Endothelial cell of umbilical vein (primary cell): ENCODE measurements at regions of chr4 and their contacts with region 1.

Region 1: GRCh38 chr4:6250235-6250983 is 19.2 kb upstream of the WFS1 start:
- DNase-seq: peak; percentile 74
- H3K4me3 ChIP-seq: no peak overlapping the region
- H3K27ac ChIP-seq: no peak overlapping the region
- H3K4me1 ChIP-seq: no peaks in the 10 kb centered on the region
- H3K27me3 ChIP-seq: peaks cover 6 to 8% of the 10 kb centered on the region in 2 experiments
- CTCF ChIP-seq: peak; percentile 61 to 62
- POLR2A ChIP-seq: no peak

Region 2: DNA sequence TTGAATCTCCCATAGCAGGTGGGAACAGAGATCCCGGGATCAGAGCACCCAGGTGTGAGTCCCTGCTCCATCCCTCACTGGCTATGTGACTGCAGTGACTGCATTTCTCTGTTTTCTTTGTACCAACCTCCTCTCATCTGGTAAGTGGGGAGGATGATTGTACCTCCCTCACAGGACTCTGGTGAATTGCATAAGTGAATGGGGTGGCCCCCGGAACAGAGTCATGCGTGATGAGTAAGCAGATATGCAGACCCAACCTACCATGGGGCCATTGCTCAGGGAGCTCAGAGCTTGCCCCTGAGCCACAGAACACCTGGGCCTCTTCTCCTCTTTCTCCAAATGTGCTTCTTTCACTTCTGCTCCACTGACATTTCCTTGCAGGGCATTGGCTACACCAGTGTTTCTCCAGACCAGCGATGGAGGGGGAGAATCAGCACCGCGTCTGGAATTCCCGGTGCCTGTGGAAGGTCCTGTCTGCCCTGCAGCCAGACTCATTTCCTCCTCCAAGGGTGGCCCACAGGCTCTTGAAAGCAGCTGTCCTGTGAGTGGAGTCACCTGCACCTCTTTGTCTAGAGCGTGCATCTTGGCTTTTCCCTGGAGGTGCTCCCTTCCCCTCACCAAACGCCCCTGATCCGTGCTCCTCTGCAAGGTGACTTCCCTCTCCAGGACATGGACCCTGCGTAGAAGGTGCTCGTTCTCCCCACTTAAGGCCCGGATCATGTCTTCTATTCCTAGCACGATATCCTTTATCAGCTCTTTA is 262.1 kb before region 1 on chr4:
- CTCF ChIA-PET with region 1: no interaction called
- POLR2A ChIA-PET with region 1: no interaction called
- dilution Hi-C with region 1: no loop called
- intact Hi-C with region 1: no loop called
- DNase-seq: no peak
- H3K4me3 ChIP-seq: no peak overlapping the region
- H3K27ac ChIP-seq: no peak overlapping the region
- H3K4me1 ChIP-seq: no peaks in the 10 kb centered on the region
- H3K27me3 ChIP-seq: no peaks in the 10 kb centered on the region
- CTCF ChIP-seq: no peak
- POLR2A ChIP-seq: no peak

Region 3: DNA sequence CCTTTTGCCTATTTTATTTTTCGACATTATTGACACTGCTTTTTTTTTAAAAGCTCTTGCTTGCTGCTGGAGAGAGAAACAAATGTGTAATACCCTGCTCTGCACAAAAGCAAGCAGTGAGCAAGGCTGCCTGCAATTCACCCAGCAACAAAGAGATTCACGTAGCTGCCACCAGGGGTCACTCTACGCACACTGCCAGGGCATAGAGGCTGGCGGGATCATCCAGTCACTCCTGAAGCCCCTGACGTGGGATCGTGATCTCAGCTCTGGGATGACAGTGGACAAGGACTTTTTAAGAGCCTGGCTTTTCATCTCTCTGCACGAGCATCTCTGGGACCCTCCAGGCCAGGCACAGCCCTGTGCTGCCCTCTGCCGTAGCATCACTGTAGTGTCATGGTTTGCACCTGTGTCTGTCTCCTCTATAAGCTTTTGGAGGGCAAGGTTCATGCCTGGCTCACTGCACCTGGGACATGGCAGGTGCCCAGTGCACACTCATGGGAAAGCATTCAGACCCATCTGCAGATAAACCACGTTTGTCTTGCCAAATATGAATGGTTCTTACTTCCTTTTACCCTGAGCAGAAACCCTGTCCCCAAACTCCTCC is 252.0 kb before region 1 on chr4:
- CTCF ChIA-PET with region 1: interaction called, 23 read pairs
- POLR2A ChIA-PET with region 1: no interaction called
- dilution Hi-C with region 1: no loop called
- intact Hi-C with region 1: no loop called
- DNase-seq: peak; percentile 46
- H3K4me3 ChIP-seq: no peak overlapping the region
- H3K27ac ChIP-seq: no peak overlapping the region
- H3K4me1 ChIP-seq: no peaks in the 10 kb centered on the region
- H3K27me3 ChIP-seq: no peaks in the 10 kb centered on the region
- CTCF ChIP-seq: peak; percentile 88 to 90
- POLR2A ChIP-seq: no peak

Region 4: GRCh38 chr4:6239968-6240367 is 10.4 kb before region 1 on chr4:
- CTCF ChIA-PET with region 1: interaction called, 13 read pairs
- POLR2A ChIA-PET with region 1: no interaction called
- dilution Hi-C with region 1: no loop called
- intact Hi-C with region 1: no loop called
- DNase-seq: no peak
- H3K4me3 ChIP-seq: no peak overlapping the region
- H3K27ac ChIP-seq: no peak overlapping the region
- H3K4me1 ChIP-seq: no peaks in the 10 kb centered on the region
- H3K27me3 ChIP-seq: no peaks in the 10 kb centered on the region
- CTCF ChIP-seq: no peak
- POLR2A ChIP-seq: no peak

Region 5: GRCh38 chr4:6269616-6270511 is 19.5 kb after region 1 on chr4 and contains the start of gene WFS1:
- CTCF ChIA-PET with region 1: interaction called, 151 read pairs
- POLR2A ChIA-PET with region 1: no interaction called
- dilution Hi-C with region 1: no loop called
- intact Hi-C with region 1: no loop called
- DNase-seq: peak; percentile 99
- H3K4me3 ChIP-seq: peak within 1 kb of the TSS; percentile 60 to 76 (median 61)
- H3K27ac ChIP-seq: no peak within 1 kb of the TSS
- H3K4me1 ChIP-seq: peaks cover 15% of the 10 kb centered on the region
- H3K27me3 ChIP-seq: peaks cover 11 to 13% of the 10 kb centered on the region in 2 experiments
- CTCF ChIP-seq: no peak
- POLR2A ChIP-seq: peak; percentile 54
- total RNA-seq, gene WFS1: 42.7 and 48.2 TPM in 2 replicates

Region 6: GRCh38 chr4:6308899-6309643 is 58.7 kb after region 1 on chr4:
- CTCF ChIA-PET with region 1: interaction called, 10 read pairs
- POLR2A ChIA-PET with region 1: no interaction called
- dilution Hi-C with region 1: no loop called
- intact Hi-C with region 1: no loop called
- DNase-seq: peak; percentile 44
- H3K4me3 ChIP-seq: peak overlapping the region in 2 of 3 experiments; percentile 18 to 32
- H3K27ac ChIP-seq: no peak overlapping the region
- H3K4me1 ChIP-seq: no peaks in the 10 kb centered on the region
- H3K27me3 ChIP-seq: peaks cover 16 to 25% of the 10 kb centered on the region in 2 experiments
- CTCF ChIP-seq: peak in 1 of 2 donors; percentile 25
- POLR2A ChIP-seq: no peak

Region 7: DNA sequence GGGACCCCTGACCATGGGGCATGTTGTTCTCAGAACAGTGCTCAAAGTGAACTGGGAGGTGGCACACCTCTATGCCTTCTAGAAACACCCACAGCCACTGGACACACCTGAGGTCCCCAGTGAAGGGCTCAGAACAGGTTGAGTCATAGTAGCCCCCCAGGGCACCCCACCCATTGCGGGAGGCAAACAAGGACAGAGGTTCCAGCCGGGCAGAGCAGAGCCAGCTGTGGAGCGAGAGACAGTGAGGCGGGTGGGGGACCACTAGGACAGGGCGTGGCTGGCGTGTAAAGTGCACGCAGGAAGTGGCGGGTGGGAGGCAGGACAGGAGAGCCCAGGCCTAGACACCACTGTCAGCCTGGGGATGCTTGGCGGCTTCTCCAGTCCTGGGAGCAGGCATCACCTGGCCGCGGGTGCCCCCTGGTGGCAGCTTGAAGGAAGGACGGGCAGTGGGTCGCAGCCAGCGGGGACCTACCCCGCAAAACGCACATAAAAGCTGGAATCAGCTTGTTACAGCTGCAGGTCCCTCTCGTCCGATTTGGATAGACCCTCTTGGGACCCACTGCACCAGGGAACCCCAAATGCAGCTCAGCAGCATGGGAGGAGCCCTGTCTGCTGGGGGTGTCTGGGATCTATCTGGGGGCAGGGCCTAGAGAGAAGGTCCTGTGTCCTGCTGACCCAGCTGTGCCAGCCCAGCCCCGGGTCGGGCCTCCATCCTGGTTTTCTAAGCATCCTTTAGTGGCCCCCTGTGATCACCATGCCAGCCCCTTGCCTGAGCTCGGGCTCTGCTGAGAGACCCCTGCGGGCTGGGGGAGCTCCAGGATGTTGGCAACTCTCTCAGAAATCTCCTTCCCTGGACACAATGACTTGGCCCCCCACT is 76.9 kb after region 1 on chr4:
- CTCF ChIA-PET with region 1: interaction called, 808 read pairs
- POLR2A ChIA-PET with region 1: no interaction called
- dilution Hi-C with region 1: no loop called
- intact Hi-C with region 1: loop called (anchors 1 kb)
- DNase-seq: peak; percentile 65
- H3K4me3 ChIP-seq: no peak overlapping the region
- H3K27ac ChIP-seq: no peak overlapping the region
- H3K4me1 ChIP-seq: peaks cover 14% of the 10 kb centered on the region
- H3K27me3 ChIP-seq: no peaks in the 10 kb centered on the region
- CTCF ChIP-seq: peak; percentile 86 to 94
- POLR2A ChIP-seq: no peak

Region 8: DNA sequence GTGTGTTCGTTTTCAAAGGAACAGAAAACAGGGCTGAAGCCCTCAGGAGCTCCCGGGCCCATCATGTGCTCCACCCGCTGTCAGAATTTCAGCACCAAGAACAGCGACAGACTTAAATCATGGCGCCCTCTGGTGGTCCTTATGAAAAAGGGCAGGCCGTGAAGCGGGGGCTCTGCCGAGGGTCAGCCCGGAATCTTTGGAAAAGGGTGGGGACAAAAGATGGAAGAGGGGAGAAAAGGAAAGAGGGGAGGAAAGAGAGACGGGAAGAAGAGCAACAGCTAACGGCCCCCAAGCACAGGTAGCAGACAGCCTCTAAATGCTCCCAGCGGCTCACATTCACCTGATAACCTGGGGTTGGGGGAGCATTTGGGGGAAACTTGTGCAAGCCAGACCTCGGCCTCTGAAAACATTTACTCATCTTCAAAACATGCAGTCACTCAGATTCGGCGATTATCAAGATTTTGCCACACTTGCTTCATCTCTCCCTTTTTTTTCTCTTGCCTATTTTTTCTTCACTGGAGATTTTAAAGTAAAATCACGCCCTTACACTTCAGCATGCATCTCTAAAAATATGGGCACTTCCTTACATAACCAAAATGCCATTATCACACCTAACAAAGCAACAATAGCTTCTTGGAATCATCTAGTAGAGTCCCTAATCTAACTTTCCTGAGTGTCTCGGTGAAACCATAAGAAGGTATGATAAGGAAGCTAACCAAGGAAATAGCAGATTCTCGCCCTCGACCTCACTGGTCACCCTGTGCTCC is 296.5 kb after region 1 on chr4:
- CTCF ChIA-PET with region 1: interaction called, 125 read pairs
- POLR2A ChIA-PET with region 1: no interaction called
- dilution Hi-C with region 1: no loop called
- intact Hi-C with region 1: loop called (anchors 1 kb)
- DNase-seq: peak; percentile 44
- H3K4me3 ChIP-seq: no peak overlapping the region
- H3K27ac ChIP-seq: no peak overlapping the region
- H3K4me1 ChIP-seq: no peaks in the 10 kb centered on the region
- H3K27me3 ChIP-seq: no peaks in the 10 kb centered on the region
- CTCF ChIP-seq: peak; percentile 89 to 94
- POLR2A ChIP-seq: no peak

Region 9: GRCh38 chr4:7195546-7196287 is 945.3 kb after region 1 on chr4:
- CTCF ChIA-PET with region 1: no interaction called
- POLR2A ChIA-PET with region 1: no interaction called
- dilution Hi-C with region 1: no loop called
- intact Hi-C with region 1: no loop called
- DNase-seq: no peak
- H3K4me3 ChIP-seq: no peak overlapping the region
- H3K27ac ChIP-seq: no peak overlapping the region
- H3K4me1 ChIP-seq: no peaks in the 10 kb centered on the region
- H3K27me3 ChIP-seq: peaks cover 36 to 37% of the 10 kb centered on the region in 2 experiments
- CTCF ChIP-seq: no peak
- POLR2A ChIP-seq: no peak